H1 (cell line): ENCODE measurements at regions of chr14 and their contacts with region 1.

Region 1: GRCh38 chr14:29548948-29549370 is 378.7 kb downstream of the PRKD1 start:
- DNase-seq: no peak
- H3K4me3 ChIP-seq: no peak overlapping the region
- H3K27ac ChIP-seq: no peak overlapping the region
- H3K4me1 ChIP-seq: no peaks in the 10 kb centered on the region
- H3K27me3 ChIP-seq: no peaks in the 10 kb centered on the region
- CTCF ChIP-seq: peak in 2 of 3 experiments; percentile 47 to 54; a peak in 3 of 4 replicates
- EP300 ChIP-seq: no peak
- POLR2A ChIP-seq: no peak
- RAD21 ChIP-seq: peak; percentile 73 to 77

Region 2: DNA sequence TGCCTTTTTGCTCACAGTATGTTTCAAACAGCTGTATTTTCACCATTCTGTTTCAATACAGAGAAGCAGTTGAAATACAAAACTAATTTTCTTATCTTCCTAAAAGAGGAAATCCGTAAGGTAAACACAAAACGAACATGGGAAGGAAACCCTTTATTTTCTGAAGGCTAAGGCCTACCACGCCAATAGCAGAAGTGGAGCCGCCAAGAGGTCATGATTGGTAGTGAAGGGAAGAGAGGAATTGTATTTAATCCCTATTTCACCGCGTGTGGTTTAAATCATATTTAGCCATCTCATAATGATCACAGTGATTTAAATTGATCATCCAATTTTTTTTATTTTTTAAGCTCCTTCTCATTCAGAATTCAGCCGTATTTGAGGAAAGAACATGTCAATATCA is 19.5 kb before region 1 on chr14:
- CTCF ChIA-PET with region 1: interaction called, 15 read pairs
- POLR2A ChIA-PET with region 1: no interaction called
- DNase-seq: no peak
- H3K4me3 ChIP-seq: no peak overlapping the region
- H3K27ac ChIP-seq: no peak overlapping the region
- H3K4me1 ChIP-seq: no peaks in the 10 kb centered on the region; a peak in 1 of 7 replicates
- H3K27me3 ChIP-seq: no peaks in the 10 kb centered on the region
- CTCF ChIP-seq: peak in 2 of 3 experiments; percentile 51 to 62; a peak in 3 of 4 replicates
- EP300 ChIP-seq: no peak
- POLR2A ChIP-seq: no peak
- RAD21 ChIP-seq: peak; percentile 55 to 62; a peak in 3 of 4 replicates

Region 3: DNA sequence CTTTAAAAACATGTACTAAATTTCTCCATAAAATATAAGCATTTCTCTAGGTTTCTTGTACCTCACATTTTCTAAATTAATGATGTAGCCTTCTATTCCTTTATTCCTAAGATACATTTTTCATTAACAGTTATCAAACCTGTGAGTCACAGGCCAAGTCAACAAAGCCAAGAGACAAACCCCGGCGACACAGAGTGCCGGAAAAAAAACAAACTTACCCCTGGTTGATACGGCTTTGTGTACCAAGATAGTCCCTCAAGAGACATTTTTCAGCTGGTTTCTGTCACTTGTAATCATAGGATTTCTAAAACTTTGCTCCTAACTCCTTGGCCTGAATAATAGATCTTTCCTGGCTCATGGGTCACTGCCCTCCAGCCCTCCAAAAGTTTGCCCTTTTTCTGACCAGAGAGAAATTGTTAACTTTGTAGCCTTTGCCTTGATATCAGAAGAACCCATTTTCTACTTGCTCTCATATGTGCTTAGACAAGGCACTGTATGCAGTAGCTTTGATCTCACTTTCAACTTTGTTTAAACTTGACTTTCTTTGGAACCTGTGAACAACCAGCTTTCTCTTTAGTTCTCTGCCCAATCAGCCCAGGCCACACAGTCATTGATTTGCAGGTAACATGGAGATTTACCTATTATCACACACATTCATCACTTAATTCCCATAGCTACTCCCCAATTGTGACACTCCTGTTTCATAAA is 206.5 kb after region 1 on chr14:
- CTCF ChIA-PET with region 1: interaction called, 29 read pairs
- POLR2A ChIA-PET with region 1: interaction called, 3 read pairs
- DNase-seq: no peak
- H3K4me3 ChIP-seq: no peak overlapping the region
- H3K27ac ChIP-seq: no peak overlapping the region
- H3K4me1 ChIP-seq: no peaks in the 10 kb centered on the region
- H3K27me3 ChIP-seq: no peaks in the 10 kb centered on the region
- CTCF ChIP-seq: no peak
- EP300 ChIP-seq: no peak
- POLR2A ChIP-seq: no peak
- RAD21 ChIP-seq: no peak

Region 4: DNA sequence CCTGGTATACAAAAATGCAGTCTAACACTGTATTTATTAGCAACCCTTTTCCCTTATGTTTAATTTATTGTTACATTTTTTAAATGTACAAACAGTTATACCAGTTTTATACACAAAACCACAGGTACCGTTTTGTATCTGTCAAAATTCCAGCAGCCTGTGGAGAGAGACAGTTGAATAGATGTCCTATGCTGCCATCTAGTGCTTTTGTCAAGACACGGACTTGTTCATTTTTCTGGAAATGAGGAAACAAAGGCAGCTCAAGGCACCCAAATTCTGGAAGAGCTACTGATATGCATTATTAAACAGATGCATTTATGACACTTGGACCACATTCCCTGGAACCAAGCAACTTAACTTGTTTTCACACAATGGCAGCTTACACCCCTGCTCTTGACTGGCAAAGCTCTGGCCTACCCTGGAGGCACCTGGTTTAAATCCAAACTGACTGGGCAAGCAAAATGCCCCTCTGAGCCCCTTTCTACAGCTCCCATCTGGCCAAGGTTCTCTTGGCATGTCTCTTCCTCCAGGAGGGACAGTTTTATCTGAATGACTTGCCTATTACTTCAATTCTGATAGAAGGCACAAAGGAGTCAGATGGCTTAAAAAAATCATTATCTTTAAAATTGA is 665.6 kb after region 1 on chr14:
- CTCF ChIA-PET with region 1: interaction called, 23 read pairs
- POLR2A ChIA-PET with region 1: no interaction called
- DNase-seq: no peak
- H3K4me3 ChIP-seq: no peak overlapping the region
- H3K27ac ChIP-seq: no peak overlapping the region
- H3K4me1 ChIP-seq: no peaks in the 10 kb centered on the region
- H3K27me3 ChIP-seq: no peaks in the 10 kb centered on the region
- CTCF ChIP-seq: peak in 2 of 3 experiments; percentile 63 to 71; a peak in 3 of 4 replicates
- EP300 ChIP-seq: no peak
- POLR2A ChIP-seq: no peak
- RAD21 ChIP-seq: peak; percentile 91 to 93